PC-3 (cell line): ENCODE measurements at regions of chr6 and their contacts with region 1.

Region 1: DNA sequence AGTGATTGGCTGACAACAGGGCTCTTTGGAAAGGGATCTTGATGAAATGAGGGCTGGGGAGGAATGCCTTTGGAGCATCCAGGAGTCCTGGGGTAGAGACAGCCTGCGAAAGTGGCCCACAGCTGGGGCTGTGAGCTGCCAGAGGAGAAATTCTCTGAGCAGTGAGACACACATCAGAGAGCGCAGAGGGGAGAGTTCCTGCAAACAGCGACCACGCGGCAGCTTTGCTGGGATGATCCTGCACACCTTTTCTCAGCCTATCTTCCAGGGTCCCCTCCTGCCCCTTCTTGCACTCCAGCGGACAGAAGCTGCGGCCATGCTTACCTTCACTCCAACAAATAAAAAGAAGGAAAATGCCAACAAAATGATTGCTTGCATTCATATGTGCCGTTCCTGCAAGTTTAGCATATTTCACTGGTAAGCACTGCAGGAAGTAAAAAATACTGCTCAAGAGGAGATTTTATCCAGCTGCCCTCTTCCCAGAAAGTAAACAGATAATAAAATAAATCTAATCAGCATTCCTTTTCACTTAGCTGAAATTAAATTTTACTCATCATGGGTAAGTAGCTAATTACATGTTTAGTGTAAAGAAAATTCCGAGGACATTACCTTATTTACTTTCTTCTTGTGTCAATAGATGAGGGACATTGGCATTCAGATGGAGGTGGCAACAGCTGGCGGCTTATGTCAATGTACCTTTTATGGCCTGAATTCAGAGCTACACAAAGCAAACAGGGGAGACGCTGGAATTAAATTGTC is 339.9 kb upstream of the ARID1B start:
- DNase-seq: peak; percentile 40
- ATAC-seq: peak; percentile 78
- H3K4me3 ChIP-seq: peak overlapping the region; percentile 54; the same call in 1 of the 2 replicates
- H3K27ac ChIP-seq: no peak overlapping the region; the same call in 1 of the 2 replicates
- H3K4me1 ChIP-seq: peaks cover 18% of the 10 kb centered on the region
- H3K27me3 ChIP-seq: no peaks in the 10 kb centered on the region
- CTCF ChIP-seq: no peak

Region 2: DNA sequence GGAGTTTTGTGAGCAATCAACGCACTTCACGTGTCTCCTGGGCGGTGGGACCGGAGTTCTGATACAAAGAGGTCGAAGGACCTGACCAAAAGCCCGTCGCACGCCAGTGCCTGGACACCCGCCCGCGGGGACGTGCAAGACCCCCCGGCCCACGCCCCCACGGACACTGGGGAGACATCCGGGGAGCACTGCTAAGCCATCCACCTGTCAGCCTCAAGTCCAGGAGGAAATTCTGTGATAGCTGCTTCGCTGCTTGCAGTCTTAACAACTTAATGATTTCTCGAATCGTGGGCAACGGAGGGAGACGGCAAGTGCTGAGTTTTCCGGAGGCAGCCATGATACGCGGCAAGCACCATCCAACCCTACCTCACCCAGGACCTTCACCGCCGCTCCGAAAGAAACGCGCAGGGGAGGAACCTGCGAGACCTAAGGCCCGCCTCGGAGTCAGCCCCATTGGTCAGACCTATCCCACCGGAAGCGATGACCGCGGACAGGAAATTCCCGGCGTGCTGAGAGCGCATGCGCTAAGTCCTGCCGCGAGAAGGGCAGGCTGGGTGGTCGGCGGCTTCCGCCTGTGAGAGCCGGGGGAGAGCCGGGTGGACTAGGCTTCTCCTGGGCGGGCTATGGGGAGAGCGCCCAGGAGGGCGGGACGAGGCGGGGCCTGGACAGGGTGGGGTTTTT is 1123.1 kb before region 1 on chr6 and contains the start of gene TFB1M:
- CTCF ChIA-PET with region 1: no interaction called
- POLR2A ChIA-PET with region 1: no interaction called
- intact Hi-C with region 1: loop called (anchors 10 kb)
- DNase-seq: peak; percentile 98
- ATAC-seq: peak; percentile 92
- H3K4me3 ChIP-seq: peak within 1 kb of the TSS; percentile 89
- H3K27ac ChIP-seq: peak within 1 kb of the TSS; percentile 84
- H3K4me1 ChIP-seq: peaks cover 38% of the 10 kb centered on the region
- H3K27me3 ChIP-seq: no peaks in the 10 kb centered on the region
- CTCF ChIP-seq: no peak
- total RNA-seq, gene TFB1M: 23.1 and 25.6 TPM in 2 replicates

Region 3: DNA sequence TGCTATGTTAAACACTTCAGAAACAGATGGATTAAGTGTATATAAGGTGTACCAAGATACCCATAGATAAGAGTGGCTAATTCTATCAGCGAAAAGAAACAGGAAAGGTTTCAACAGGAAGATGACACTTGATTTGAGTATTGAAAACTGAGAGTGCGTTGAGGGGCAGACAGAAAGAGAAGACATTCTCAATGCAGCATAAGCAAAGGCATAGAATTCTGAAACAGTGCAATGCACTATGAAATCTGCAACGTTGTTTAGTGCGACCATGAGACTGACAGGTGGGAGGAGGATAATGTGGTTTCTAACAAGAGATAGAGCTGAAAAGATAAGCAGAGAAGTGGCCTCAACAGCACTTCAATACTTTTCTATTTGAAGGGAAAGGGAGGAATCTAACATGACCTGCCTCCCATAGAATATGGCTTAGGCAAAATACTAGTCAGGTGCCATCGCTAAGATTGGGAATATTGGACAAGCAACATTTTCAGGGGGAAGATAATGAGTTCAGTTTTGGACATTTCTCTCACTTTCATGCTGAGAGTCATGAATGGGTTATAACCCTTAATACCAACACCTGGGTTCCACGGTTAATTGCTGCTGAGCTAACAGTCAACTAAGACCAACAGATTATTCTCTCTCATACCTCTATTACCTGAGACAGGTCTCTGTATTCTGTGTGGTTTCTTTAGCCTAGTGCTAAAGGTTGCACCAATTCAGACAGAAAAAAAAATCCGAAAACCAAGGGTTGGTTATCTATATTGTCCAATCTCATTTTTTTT is 27.0 kb after region 1 on chr6:
- CTCF ChIA-PET with region 1: no interaction called
- POLR2A ChIA-PET with region 1: interaction called, 4 read pairs
- intact Hi-C with region 1: loop called (anchors 1 kb)
- DNase-seq: no peak
- ATAC-seq: no peak
- H3K4me3 ChIP-seq: no peak overlapping the region
- H3K27ac ChIP-seq: no peak overlapping the region
- H3K4me1 ChIP-seq: no peaks in the 10 kb centered on the region
- H3K27me3 ChIP-seq: peaks cover 11% of the 10 kb centered on the region
- CTCF ChIP-seq: no peak

Region 4: DNA sequence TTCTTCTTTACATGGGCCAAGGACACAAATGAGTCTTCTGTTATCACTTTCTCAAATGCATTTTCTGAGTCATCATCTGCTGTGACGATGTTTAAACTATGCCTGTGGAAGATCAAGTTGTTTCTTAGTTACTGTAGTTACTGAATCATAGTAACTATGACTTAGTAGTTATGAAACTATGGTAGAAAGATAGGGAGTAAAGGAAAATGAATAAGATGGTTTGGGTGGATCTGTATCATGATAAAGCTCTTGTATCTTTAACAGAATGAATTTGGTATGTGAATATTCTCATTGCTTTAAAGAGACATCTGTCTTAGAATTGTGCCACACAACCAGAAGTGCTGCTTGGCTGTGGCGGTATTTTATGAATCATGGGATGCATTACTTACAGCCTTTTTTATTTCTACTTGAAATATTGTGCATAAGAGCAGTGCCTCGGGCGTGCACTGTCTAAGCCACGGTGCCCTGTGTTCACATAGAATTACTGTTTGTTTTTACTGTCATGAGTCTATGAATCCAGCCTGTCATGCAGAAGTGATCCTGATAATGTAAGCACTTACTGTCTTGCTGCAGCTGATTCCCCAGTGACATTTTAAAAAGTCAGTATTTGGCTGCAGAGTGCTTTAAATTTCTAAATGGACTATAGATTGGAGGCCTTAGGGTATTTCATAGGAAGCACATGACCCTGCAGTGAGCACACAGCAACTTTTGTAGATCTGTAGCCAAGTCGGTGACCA is 670.8 kb after region 1 on chr6:
- CTCF ChIA-PET with region 1: no interaction called
- POLR2A ChIA-PET with region 1: no interaction called
- intact Hi-C with region 1: loop called (anchors 5 kb)
- DNase-seq: peak; percentile 82
- ATAC-seq: peak; percentile 77
- H3K4me3 ChIP-seq: 0 out of 2 replicates have a peak overlapping the region, but pooled peaks have one; percentile 16
- H3K27ac ChIP-seq: peak overlapping the region; percentile 79
- H3K4me1 ChIP-seq: peaks cover 37% of the 10 kb centered on the region
- H3K27me3 ChIP-seq: no peaks in the 10 kb centered on the region
- CTCF ChIP-seq: no peak